ENCODE measurements at regions of chr12 and their contacts with region 1.

Region 1: DNA sequence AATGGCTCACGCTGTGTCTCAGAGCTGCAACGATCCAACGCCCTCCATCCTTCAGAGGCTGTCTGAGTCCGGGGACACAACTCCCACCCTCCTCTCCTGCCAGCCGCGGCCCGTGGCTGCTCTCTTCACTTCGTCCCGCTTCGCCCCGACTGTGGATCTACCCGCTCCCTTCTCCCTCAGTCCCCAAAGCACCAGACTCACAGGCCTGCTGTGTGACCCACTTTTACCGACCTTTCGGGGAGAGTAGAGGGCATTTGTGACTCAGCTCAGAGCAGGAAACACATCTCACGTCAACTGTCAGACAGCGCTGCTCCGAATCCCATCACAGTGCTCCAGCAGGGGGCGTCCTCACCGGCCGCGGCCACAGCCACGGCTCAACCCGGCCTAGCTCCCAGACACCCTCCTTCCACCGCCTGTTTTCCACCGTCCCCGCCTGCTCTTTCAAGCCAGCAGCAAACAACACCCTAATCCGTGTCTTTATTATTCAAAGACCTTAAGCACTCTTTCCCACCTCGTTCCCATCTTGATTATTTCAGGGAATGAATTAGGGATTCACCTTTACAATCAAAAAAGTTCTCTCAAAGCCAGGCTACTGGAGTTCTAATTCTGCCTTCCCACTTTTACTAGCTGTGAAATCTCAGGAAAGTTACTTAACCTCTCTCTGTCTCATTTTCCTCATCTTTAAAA is 5.0 kb upstream of the AQP2 start:
- DNase-seq: peak; percentile 89
- H3K4me3 ChIP-seq: no peak overlapping the region
- H3K27ac ChIP-seq: peak overlapping the region; percentile 49
- H3K4me1 ChIP-seq: peaks cover 11% of the 10 kb centered on the region
- H3K27me3 ChIP-seq: no peaks in the 10 kb centered on the region
- CTCF ChIP-seq: peak; percentile 96 to 97
- POLR2A ChIP-seq: no peak

Region 2: GRCh38 chr12:49322708-49323523 is 622.6 kb before region 1 on chr12 and contains the start of gene TROAP:
- CTCF ChIA-PET with region 1: no interaction called
- POLR2A ChIA-PET with region 1: no interaction called
- dilution Hi-C with region 1: no loop called
- intact Hi-C with region 1: no loop called
- DNase-seq: peak; percentile 99
- H3K4me3 ChIP-seq: peak within 1 kb of the TSS; percentile 59 to 90 (median 73)
- H3K27ac ChIP-seq: peak within 1 kb of the TSS; percentile 58
- H3K4me1 ChIP-seq: peaks cover 12% of the 10 kb centered on the region
- H3K27me3 ChIP-seq: no peaks in the 10 kb centered on the region
- CTCF ChIP-seq: no peak
- POLR2A ChIP-seq: peak; percentile 52
- total RNA-seq, gene TROAP: 62.4 and 68.6 TPM in 2 replicates

Region 3: GRCh38 chr12:49866859-49867579 is 78.5 kb before region 1 on chr12:
- CTCF ChIA-PET with region 1: interaction called, 47 read pairs
- POLR2A ChIA-PET with region 1: no interaction called
- dilution Hi-C with region 1: no loop called
- intact Hi-C with region 1: loop called (anchors 1 kb)
- DNase-seq: peak; percentile 42
- H3K4me3 ChIP-seq: no peak overlapping the region
- H3K27ac ChIP-seq: no peak overlapping the region
- H3K4me1 ChIP-seq: peaks cover 20% of the 10 kb centered on the region
- H3K27me3 ChIP-seq: peaks cover 2 to 7% of the 10 kb centered on the region in 2 experiments
- CTCF ChIP-seq: peak; percentile 91 to 97
- POLR2A ChIP-seq: no peak

Region 4: DNA sequence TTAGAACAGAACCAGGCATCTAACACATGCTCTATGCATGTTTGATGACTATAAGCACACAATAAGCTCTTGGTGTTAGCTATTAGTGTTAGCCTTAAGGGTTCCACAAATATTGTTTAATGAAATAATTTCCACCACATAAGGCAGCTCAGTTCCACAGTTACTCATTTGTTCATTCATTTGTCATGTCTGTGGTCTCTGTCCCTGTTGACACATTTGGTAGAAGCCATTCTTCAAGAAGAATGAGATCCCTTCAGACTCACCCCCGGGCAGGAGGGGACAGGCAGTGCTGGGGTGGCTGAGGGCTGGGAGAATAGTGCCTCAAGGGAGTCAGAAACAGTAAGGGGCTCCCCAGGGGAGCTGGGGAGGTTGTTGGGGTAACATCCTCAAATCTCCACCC is 38.2 kb before region 1 on chr12:
- CTCF ChIA-PET with region 1: interaction called, 15 read pairs
- POLR2A ChIA-PET with region 1: no interaction called
- dilution Hi-C with region 1: no loop called
- intact Hi-C with region 1: no loop called
- DNase-seq: no peak
- H3K4me3 ChIP-seq: no peak overlapping the region
- H3K27ac ChIP-seq: no peak overlapping the region
- H3K4me1 ChIP-seq: peaks cover 4% of the 10 kb centered on the region
- H3K27me3 ChIP-seq: peaks cover 0 to 2% of the 10 kb centered on the region in 2 experiments
- CTCF ChIP-seq: no peak
- POLR2A ChIP-seq: no peak

Region 5: DNA sequence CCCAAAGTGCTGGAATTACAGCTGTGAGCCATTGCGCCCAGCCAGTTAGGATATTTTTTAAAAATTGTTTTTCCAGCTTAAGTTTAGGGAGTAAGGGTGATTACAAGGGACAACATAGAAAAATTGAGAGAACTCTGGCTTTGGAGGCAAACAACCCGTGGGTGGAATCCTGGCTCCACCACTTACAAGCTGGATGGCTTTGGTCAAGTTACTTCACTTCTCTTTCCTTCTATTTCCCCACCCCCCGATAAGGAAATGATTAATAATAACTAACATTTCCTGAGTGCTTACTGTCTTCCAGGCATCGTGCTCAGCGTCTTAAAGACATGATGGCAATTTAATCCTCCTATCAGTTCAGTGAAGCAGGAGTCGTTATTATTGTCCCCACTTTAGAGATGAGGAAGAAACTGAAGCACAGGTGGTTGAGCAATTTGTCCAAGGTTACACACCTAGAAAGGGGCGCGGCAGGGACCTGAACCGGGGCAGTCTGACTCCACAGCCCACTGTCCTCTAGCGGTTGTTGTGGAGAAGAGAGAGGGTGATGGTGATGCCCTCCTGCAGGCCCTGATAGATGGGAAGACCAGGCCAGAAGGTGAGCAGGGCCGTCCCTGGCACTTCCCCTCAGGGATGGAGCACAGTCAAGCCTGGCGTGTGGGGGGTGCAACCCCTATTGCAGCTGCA is 25.2 kb before region 1 on chr12:
- CTCF ChIA-PET with region 1: interaction called, 16 read pairs
- POLR2A ChIA-PET with region 1: no interaction called
- dilution Hi-C with region 1: no loop called
- intact Hi-C with region 1: loop called (anchors 1 kb)
- DNase-seq: peak; percentile 65
- H3K4me3 ChIP-seq: no peak overlapping the region
- H3K27ac ChIP-seq: peak overlapping the region; percentile 2
- H3K4me1 ChIP-seq: peaks cover 16% of the 10 kb centered on the region
- H3K27me3 ChIP-seq: no peaks in the 10 kb centered on the region
- CTCF ChIP-seq: peak in 1 of 2 donors; percentile 9
- POLR2A ChIP-seq: no peak

Region 6: GRCh38 chr12:49959570-49960465 is 14.3 kb after region 1 on chr12:
- CTCF ChIA-PET with region 1: interaction called, 112 read pairs
- POLR2A ChIA-PET with region 1: no interaction called
- dilution Hi-C with region 1: no loop called
- intact Hi-C with region 1: loop called (anchors 1 kb)
- DNase-seq: peak; percentile 88
- H3K4me3 ChIP-seq: no peak overlapping the region
- H3K27ac ChIP-seq: peak overlapping the region; percentile 69
- H3K4me1 ChIP-seq: peaks cover 30% of the 10 kb centered on the region
- H3K27me3 ChIP-seq: no peaks in the 10 kb centered on the region
- CTCF ChIP-seq: no peak
- POLR2A ChIP-seq: peak; percentile 34

Region 7: GRCh38 chr12:50055831-50056638 is 110.5 kb after region 1 on chr12:
- CTCF ChIA-PET with region 1: interaction called, 11 read pairs
- POLR2A ChIA-PET with region 1: no interaction called
- dilution Hi-C with region 1: loop called (anchors 25 kb)
- intact Hi-C with region 1: no loop called
- DNase-seq: peak; percentile 59
- H3K4me3 ChIP-seq: no peak overlapping the region
- H3K27ac ChIP-seq: no peak overlapping the region
- H3K4me1 ChIP-seq: peaks cover 5% of the 10 kb centered on the region
- H3K27me3 ChIP-seq: peaks cover 54 to 56% of the 10 kb centered on the region in 2 experiments
- CTCF ChIP-seq: peak; percentile 95 to 96
- POLR2A ChIP-seq: no peak